Uterus (tissue), 4 donors: ENCODE measurements at regions of chr13 and their contacts with region 1.

Region 1: GRCh38 chr13:99176309-99177276 is 24.1 kb upstream of the UBAC2 start:
- DNase-seq: peak; percentile 69 to 71
- H3K4me3 ChIP-seq: no peak overlapping the region
- H3K27ac ChIP-seq: no peak overlapping the region
- H3K4me1 ChIP-seq: no peaks in the 10 kb centered on the region
- H3K27me3 ChIP-seq: no peaks in the 10 kb centered on the region
- CTCF ChIP-seq: peak; percentile 80 to 88 (median 85)
- POLR2A ChIP-seq: no peak

Region 2: DNA sequence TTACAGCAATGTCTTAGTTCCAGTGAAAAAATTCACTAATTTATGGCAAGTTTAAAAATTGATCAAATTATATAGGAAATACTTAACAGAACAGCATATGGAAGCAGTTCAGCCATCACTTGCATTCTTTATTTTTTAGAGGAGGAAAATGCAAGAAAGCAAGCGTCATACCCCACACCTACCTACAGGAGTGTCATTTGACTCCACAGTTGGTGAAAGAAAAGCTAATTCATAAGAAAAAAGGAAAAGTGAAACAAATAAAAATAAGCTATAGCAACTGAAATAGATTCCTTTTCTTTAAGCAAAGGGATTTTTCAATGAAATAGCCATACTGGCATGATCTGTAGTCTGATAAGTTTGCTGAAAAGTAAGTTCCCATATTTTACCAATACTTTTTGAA is 309.7 kb before region 1 on chr13:
- intact Hi-C with region 1: no loop called
- DNase-seq: no peak
- H3K4me3 ChIP-seq: no peak overlapping the region
- H3K27ac ChIP-seq: no peak overlapping the region
- H3K4me1 ChIP-seq: no peaks in the 10 kb centered on the region
- H3K27me3 ChIP-seq: no peaks in the 10 kb centered on the region
- CTCF ChIP-seq: no peak
- POLR2A ChIP-seq: no peak

Region 3: DNA sequence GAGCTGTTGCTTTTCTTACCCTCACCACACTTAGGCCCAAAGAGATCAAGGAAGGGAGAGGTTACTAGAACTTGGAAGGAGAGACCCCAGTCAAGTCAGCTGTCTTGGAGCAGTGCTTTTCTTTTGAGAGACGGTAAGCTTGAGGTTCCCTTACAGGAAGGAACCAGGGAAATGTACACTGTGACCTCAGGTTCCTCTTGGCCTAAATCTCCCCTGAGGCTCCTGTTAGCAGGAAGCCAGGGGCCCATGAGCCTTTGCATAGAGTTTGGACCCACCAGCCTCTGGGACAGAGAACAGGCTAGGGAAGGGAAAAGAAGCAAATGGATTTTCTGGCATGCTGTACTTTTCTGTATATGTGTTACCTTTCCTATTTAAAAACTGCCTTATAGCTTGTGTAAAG is 87.5 kb after region 1 on chr13:
- intact Hi-C with region 1: loop called (anchors 5 kb)
- DNase-seq: no peak
- H3K4me3 ChIP-seq: no peak overlapping the region
- H3K27ac ChIP-seq: no peak overlapping the region
- H3K4me1 ChIP-seq: no peaks in the 10 kb centered on the region
- H3K27me3 ChIP-seq: no peaks in the 10 kb centered on the region
- CTCF ChIP-seq: no peak
- POLR2A ChIP-seq: no peak

Region 4: GRCh38 chr13:99436686-99437416 is 260.3 kb after region 1 on chr13:
- intact Hi-C with region 1: loop called (anchors 5 kb)
- DNase-seq: peak; percentile 78 to 80
- H3K4me3 ChIP-seq: no peak overlapping the region
- H3K27ac ChIP-seq: no peak overlapping the region
- H3K4me1 ChIP-seq: no peaks in the 10 kb centered on the region
- H3K27me3 ChIP-seq: no peaks in the 10 kb centered on the region
- CTCF ChIP-seq: peak; percentile 96 to 99 (median 98)
- POLR2A ChIP-seq: no peak